Panc1 (cell line): ENCODE measurements at regions of chr10 and their contacts with region 1.

Region 1: GRCh38 chr10:89554433-89554832 is 19.0 kb upstream of the SLC16A12 start:
- DNase-seq: no peak
- ATAC-seq: no peak
- H3K4me3 ChIP-seq: no peak overlapping the region
- H3K27ac ChIP-seq: no peak overlapping the region
- H3K4me1 ChIP-seq: no peaks in the 10 kb centered on the region
- H3K27me3 ChIP-seq: no peaks in the 10 kb centered on the region; the same call in 1 of the 2 replicates
- CTCF ChIP-seq: no peak

Region 2: GRCh38 chr10:89414146-89414878 is 140.1 kb before region 1 on chr10 and contains the start of gene IFIT5:
- CTCF ChIA-PET with region 1: no interaction called
- POLR2A ChIA-PET with region 1: no interaction called
- in situ Hi-C with region 1: no loop called
- intact Hi-C with region 1: no loop called
- DNase-seq: peak; percentile 66
- ATAC-seq: peak; percentile 94
- H3K4me3 ChIP-seq: peak within 1 kb of the TSS; percentile 66 to 96
- H3K27ac ChIP-seq: peak within 1 kb of the TSS; percentile 87
- H3K4me1 ChIP-seq: peaks cover 11% of the 10 kb centered on the region
- H3K27me3 ChIP-seq: no peaks in the 10 kb centered on the region
- CTCF ChIP-seq: no peak
- total RNA-seq, gene IFIT5: 11.1 TPM

Region 3: DNA sequence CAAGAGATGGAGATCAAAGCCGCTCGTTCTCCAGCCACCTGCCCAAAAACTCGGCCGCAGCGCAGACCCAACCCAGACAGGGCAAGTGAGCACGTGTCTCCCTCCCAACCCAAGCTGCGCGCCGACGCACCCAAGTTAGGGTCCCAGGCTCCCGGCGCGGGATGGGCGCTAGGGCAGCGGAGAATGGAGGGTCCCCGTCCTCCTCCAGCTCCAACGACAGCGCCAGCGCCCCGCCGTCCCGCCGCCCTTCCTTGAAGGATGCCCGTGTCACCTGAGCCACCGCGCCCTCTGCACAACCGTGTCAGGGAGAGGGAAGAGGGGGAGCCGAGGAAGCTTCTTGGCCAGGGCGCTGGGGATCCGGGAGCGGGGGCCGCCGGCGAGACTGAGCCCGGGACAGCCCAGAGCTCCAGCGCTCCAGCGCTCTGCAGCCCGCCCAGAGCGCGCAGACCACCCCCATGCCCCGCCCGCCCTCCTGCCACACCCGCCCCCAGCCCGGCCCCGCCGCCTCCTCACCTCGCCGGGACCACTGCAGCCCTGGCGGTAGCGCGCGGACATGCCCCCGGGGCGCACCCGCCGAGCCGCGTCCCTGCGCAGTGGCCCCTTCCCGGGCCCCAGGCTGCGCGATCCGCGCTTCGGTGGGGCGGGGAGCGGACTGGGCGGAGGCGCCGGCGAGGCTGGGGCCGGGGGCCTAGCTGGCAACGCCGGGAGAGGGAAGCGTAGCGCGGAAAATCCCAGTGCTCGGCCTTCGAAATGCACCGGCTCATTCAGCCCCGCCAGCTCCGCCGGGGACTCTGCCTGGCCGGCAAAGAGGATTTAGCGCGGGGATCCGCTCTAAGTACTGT is 19.0 kb before region 1 on chr10 and contains the start of gene SLC16A12:
- CTCF ChIA-PET with region 1: interaction called, 10 read pairs
- POLR2A ChIA-PET with region 1: no interaction called
- in situ Hi-C with region 1: no loop called
- intact Hi-C with region 1: no loop called
- DNase-seq: no peak
- ATAC-seq: peak; percentile 82
- H3K4me3 ChIP-seq: peak within 1 kb of the TSS; percentile 35 to 37
- H3K27ac ChIP-seq: no peak within 1 kb of the TSS
- H3K4me1 ChIP-seq: peaks cover 6% of the 10 kb centered on the region; the same call in 1 of the 2 replicates
- H3K27me3 ChIP-seq: peaks cover 54% of the 10 kb centered on the region
- CTCF ChIP-seq: 0 out of 2 replicates have a peak, but pooled peaks have one; percentile 9
- total RNA-seq, gene SLC16A12: not detected